HEK293 (cell line): ENCODE measurements at regions of chr15 and their contacts with region 1.

Region 1: DNA sequence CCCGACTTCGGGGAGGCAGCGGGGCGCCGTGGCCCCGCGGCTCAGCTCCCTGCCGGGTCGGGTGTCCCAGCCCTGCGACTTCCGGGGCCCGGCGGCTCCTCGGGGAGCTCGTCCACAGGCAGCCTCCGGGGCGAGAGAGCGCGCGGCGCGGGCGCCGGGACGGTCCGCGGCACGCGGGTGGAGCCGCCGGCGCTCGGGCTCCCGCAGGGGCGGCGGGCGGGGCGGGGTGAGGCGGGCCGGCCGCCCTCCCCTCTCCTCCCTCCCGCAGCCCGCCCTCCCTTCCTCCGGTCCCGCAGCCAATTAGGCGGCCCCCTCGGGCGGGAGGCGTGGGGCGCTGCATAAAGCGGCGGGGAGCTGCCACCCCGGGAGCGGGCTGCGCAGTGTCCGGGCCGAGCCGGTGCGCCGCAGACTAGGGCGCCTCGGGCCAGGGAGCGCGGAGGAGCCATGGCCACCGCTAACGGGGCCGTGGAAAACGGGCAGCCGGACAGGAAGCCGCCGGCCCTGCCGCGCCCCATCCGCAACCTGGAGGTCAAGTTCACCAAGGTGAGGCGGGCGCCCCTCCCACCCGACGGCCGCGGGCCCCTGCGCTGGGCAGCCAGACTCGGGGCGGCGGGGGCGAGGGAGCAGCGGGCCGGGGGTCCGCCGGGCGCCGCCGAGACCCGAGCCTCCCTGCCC is at the start of gene ALDH1A3:
- H3K4me3 ChIP-seq: peak within 1 kb of the TSS; percentile 52
- H3K27ac ChIP-seq: peak within 1 kb of the TSS; percentile 63; the same call in 1 of the 2 replicates
- H3K4me1 ChIP-seq: peaks cover 3% of the 10 kb centered on the region
- CTCF ChIP-seq: no peak

Region 2: DNA sequence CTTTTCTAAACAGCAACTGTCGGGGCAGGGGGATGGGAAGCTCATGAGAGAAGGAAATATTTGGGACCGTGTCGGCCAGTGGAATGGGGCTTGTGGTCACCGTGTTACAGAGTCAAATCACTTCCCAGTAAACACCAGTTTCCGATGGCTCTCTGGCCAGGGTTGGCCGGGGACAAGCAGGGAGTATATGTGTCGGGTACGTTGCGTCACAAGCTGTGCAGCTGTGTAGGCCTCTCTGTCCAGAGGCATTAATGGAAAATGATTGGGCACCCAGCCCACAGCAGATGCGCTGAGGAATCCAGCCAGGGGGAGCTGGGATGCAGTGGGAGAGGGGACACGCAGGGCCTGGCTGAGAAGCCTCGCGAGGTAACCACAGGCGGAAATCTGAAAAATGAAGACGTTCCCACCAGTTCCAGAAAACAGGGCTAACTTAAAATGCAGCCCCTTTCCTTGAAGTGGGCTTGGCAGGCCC is 15.8 kb before region 1 on chr15:
- CTCF ChIA-PET with region 1: interaction called, 13 read pairs
- POLR2A ChIA-PET with region 1: no interaction called
- H3K4me3 ChIP-seq: no peak overlapping the region
- H3K27ac ChIP-seq: no peak overlapping the region
- H3K4me1 ChIP-seq: no peaks in the 10 kb centered on the region
- CTCF ChIP-seq: no peak

Region 3: GRCh38 chr15:101127506-101128076 is 248.0 kb after region 1 on chr15:
- CTCF ChIA-PET with region 1: no interaction called
- POLR2A ChIA-PET with region 1: no interaction called
- H3K4me3 ChIP-seq: no peak overlapping the region
- H3K27ac ChIP-seq: peak overlapping the region; percentile 79
- H3K4me1 ChIP-seq: peaks cover 14% of the 10 kb centered on the region
- CTCF ChIP-seq: no peak